CD8-positive, alpha-beta T cell (primary cell): ENCODE measurements at regions of chr9 and their contacts with region 1.

Region 1: DNA sequence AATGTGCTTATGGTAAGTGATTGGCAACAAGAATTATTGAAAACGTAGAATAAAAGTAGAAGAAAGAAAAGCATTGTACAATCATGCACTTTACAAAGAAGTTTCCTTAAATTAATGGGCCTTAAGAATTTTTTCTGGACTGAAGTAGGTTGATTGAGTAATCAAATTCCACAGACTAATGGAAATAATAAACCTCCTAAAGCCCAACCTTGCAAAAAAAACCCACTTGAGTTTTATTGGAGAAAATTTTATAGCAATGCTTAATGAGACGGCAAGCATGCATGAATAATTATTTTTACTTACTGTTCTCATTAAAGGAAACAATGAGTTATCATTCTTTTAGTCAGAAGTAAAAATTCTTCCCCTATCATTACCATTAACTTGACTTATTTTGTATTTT is 676.1 kb upstream of the C9orf72 start:
- DNase-seq: no peak
- ATAC-seq: no peak
- H3K4me3 ChIP-seq: no peak overlapping the region
- H3K4me3 Mint-ChIP-seq: no peak overlapping the region
- H3K27ac ChIP-seq: no peak overlapping the region
- H3K27ac Mint-ChIP-seq: no peak overlapping the region
- H3K4me1 ChIP-seq: no peaks in the 10 kb centered on the region
- H3K4me1 Mint-ChIP-seq: no peaks in the 10 kb centered on the region
- H3K27me3 ChIP-seq: no peaks in the 10 kb centered on the region
- H3K27me3 Mint-ChIP-seq: no peaks in the 10 kb centered on the region
- CTCF ChIP-seq: no peak

Region 2: DNA sequence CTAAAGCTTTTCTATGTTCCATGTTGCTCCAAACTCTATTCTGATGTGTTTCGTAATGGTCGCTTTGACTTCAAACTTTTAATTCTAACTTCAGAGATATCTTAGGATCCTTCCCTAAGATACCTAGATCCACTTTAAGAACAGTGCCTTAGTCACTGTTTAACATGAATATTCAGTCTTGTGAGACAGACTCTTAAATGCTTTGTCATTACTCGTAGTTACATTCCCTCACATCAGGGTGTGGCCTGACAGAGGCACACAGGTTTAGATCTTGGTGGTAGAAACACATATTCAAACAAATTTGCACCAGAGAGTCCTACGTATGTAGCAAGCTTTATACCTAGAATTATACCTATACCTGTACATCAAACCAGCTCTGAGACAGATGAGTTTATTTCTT is 10.9 kb after region 1 on chr9:
- CTCF ChIA-PET with region 1: no interaction called
- POLR2A ChIA-PET with region 1: no interaction called
- intact Hi-C with region 1: loop called in 1 of 2 experiments (anchors 1 kb)
- DNase-seq: no peak
- ATAC-seq: no peak
- H3K4me3 ChIP-seq: no peak overlapping the region
- H3K4me3 Mint-ChIP-seq: no peak overlapping the region
- H3K27ac ChIP-seq: no peak overlapping the region
- H3K27ac Mint-ChIP-seq: no peak overlapping the region
- H3K4me1 ChIP-seq: no peaks in the 10 kb centered on the region
- H3K4me1 Mint-ChIP-seq: no peaks in the 10 kb centered on the region
- H3K27me3 ChIP-seq: no peaks in the 10 kb centered on the region
- H3K27me3 Mint-ChIP-seq: no peaks in the 10 kb centered on the region
- CTCF ChIP-seq: no peak

Region 3: GRCh38 chr9:28270156-28270555 is 20.7 kb after region 1 on chr9:
- CTCF ChIA-PET with region 1: no interaction called
- POLR2A ChIA-PET with region 1: no interaction called
- intact Hi-C with region 1: loop called in 1 of 2 experiments (anchors 2 kb)
- DNase-seq: no peak
- ATAC-seq: no peak
- H3K4me3 ChIP-seq: no peak overlapping the region
- H3K4me3 Mint-ChIP-seq: no peak overlapping the region
- H3K27ac ChIP-seq: no peak overlapping the region
- H3K27ac Mint-ChIP-seq: no peak overlapping the region
- H3K4me1 ChIP-seq: no peaks in the 10 kb centered on the region
- H3K4me1 Mint-ChIP-seq: no peaks in the 10 kb centered on the region
- H3K27me3 ChIP-seq: no peaks in the 10 kb centered on the region
- H3K27me3 Mint-ChIP-seq: no peaks in the 10 kb centered on the region
- CTCF ChIP-seq: no peak